Mammary epithelial cell (primary cell): ENCODE measurements at regions of chr11 and their contacts with region 1.

Region 1: GRCh38 chr11:95134491-95134890 is 44.8 kb downstream of the ENDOD1 start:
- DNase-seq: peak; percentile 99
- H3K4me3 ChIP-seq: no peak overlapping the region
- H3K27ac ChIP-seq: peak overlapping the region; percentile 82
- H3K4me1 ChIP-seq: peaks cover 31% of the 10 kb centered on the region
- H3K27me3 ChIP-seq: no peaks in the 10 kb centered on the region
- CTCF ChIP-seq: no peak

Region 2: GRCh38 chr11:95014184-95014821 is 120.2 kb before region 1 on chr11:
- CTCF ChIA-PET with region 1: no interaction called
- dilution Hi-C with region 1: no loop called
- in situ Hi-C with region 1: no loop called
- intact Hi-C with region 1: no loop called
- DNase-seq: no peak
- H3K4me3 ChIP-seq: no peak overlapping the region
- H3K27ac ChIP-seq: no peak overlapping the region
- H3K4me1 ChIP-seq: no peaks in the 10 kb centered on the region
- H3K27me3 ChIP-seq: peaks cover 5% of the 10 kb centered on the region
- CTCF ChIP-seq: no peak

Region 3: GRCh38 chr11:95089620-95090542 is 44.6 kb before region 1 on chr11 and contains the start of gene ENDOD1:
- CTCF ChIA-PET with region 1: no interaction called
- dilution Hi-C with region 1: no loop called
- in situ Hi-C with region 1: no loop called
- intact Hi-C with region 1: loop called (anchors 1 kb)
- DNase-seq: peak; percentile 83
- H3K4me3 ChIP-seq: peak within 1 kb of the TSS; percentile 75 to 87 (median 80)
- H3K27ac ChIP-seq: peak within 1 kb of the TSS; percentile 69
- H3K4me1 ChIP-seq: peaks cover 48% of the 10 kb centered on the region
- H3K27me3 ChIP-seq: no peaks in the 10 kb centered on the region
- CTCF ChIP-seq: peak in 1 of 2 donors; percentile 8
- total RNA-seq, gene ENDOD1: 47.9 to 206 TPM